K562 (cell line): ENCODE measurements at regions of chr4 and their contacts with region 1.

Region 1: DNA sequence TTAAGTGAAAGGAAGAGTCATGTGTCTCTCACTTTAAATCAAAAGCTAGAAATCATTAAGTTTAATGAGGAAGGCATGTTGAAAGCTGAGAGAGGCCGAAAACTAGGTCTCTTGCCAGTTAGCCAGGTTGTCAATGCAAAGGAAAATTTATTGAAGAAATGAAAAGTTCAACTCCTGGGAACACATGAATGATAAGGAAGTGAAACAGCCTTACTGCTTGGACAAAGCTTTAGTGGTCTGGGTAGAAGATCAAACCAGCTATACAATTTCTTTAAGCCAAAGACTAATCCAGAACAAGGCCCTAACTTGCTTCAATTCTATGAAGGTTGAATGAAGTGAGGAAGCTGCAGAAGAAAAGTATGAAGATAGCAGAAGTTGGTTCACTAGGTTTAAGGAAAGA is 24.9 kb downstream of the RHOH start:
- DNase-seq: no peak
- ATAC-seq: no peak
- H3K4me3 ChIP-seq: no peak overlapping the region
- H3K27ac ChIP-seq: no peak overlapping the region
- H3K4me1 ChIP-seq: peaks cover 6 to 8% of the 10 kb centered on the region in 2 experiments; a peak in 4 of 5 replicates
- H3K27me3 ChIP-seq: no peaks in the 10 kb centered on the region
- CTCF ChIP-seq: no peak
- EP300 ChIP-seq: no peak
- POLR2A ChIP-seq: no peak
- RAD21 ChIP-seq: no peak

Region 2: DNA sequence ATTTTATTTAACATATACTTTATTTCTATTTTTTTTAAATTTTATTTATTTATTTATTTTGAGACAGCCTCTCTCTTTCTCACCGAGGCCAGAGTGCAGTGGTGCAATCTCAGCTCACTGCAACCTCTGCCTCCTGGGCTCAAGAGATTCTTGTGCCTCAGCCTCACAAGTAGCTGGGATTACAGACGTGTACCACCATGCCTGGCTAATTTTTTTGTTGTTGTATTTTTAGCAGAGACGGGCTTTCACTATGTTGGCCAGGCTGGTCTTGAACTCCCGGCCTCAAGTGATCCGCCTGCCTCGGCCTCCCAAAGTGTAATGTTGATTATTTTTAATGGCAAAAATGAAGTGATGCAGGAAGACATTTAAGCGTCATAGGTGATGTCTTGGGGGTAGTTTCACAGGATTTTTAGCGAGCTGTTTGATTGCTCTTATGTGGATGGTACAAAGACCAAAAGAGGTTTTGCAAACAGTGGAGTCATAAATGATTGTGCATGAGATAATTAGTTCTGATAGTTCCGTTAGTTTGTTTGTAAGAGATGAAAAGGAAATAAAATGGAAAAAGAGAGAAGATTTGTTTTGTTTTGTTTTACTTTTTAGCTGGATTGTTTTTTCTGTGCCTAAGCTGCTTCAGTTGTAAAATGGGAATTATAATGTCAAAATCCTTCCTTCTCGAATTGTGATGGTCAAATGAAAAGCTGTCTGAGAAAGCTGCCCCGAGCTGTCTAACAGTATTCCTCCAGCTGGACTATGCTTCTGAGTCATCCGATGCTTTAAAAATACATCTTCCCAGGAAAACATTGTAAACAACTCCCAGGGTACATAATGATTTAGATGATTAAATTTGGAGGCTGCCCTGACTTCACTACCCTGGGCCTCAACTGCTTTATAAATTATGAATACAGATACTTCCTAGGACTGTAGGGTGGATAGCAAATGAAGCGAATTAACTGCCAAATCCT is 10.2 kb before region 1 on chr4:
- CTCF ChIA-PET with region 1: no interaction called
- POLR2A ChIA-PET with region 1: interaction called, 13 read pairs
- in situ Hi-C with region 1: no loop called
- intact Hi-C with region 1: no loop called
- DNase-seq: no peak
- ATAC-seq: no peak
- H3K4me3 ChIP-seq: no peak overlapping the region
- H3K27ac ChIP-seq: peak overlapping the region; percentile 97; the same call in 2 of the 3 replicates
- H3K4me1 ChIP-seq: peaks cover 15 to 28% of the 10 kb centered on the region in 2 experiments; a peak in 4 of 5 replicates
- H3K27me3 ChIP-seq: no peaks in the 10 kb centered on the region
- CTCF ChIP-seq: no peak
- EP300 ChIP-seq: no peak
- POLR2A ChIP-seq: no peak; the same call in 1 of the 2 replicates
- RAD21 ChIP-seq: no peak